ENCODE measurements at regions of chr17 and their contacts with region 1.

Region 1: DNA sequence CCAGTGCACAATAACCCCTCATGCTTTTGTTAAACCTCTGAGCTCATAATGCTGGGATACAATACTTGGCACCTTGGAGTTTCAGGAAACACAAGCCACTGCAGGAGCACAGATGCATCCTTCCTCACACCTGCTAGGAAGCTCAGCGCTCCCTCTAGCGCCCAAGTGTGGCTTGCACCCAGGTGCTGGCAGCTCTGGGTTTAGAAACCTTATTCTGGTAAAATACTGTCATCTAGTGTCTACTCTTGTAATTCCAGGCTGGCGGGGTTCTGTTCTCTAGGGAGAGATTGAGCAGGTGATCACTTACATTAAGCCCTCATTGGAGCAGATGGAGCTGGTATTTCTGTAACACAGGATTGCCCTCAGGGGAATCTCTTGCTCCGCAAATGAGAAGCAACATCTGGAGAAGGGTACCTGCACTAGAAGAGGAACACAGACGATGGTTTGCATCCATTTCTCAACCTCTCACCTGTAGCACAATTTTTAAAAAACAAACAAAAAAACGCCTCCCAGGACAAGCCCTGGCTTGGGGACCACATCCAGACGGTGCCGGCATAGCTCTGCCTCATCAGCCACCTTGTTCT is 1.5 kb downstream of the CCL1 start:
- DNase-seq: peak; percentile 88
- ATAC-seq: peak; percentile 92
- H3K4me3 Mint-ChIP-seq: no peak overlapping the region
- H3K27ac Mint-ChIP-seq: no peak overlapping the region
- H3K4me1 Mint-ChIP-seq: peaks cover 51% of the 10 kb centered on the region
- H3K27me3 Mint-ChIP-seq: peaks cover 23% of the 10 kb centered on the region

Region 2: DNA sequence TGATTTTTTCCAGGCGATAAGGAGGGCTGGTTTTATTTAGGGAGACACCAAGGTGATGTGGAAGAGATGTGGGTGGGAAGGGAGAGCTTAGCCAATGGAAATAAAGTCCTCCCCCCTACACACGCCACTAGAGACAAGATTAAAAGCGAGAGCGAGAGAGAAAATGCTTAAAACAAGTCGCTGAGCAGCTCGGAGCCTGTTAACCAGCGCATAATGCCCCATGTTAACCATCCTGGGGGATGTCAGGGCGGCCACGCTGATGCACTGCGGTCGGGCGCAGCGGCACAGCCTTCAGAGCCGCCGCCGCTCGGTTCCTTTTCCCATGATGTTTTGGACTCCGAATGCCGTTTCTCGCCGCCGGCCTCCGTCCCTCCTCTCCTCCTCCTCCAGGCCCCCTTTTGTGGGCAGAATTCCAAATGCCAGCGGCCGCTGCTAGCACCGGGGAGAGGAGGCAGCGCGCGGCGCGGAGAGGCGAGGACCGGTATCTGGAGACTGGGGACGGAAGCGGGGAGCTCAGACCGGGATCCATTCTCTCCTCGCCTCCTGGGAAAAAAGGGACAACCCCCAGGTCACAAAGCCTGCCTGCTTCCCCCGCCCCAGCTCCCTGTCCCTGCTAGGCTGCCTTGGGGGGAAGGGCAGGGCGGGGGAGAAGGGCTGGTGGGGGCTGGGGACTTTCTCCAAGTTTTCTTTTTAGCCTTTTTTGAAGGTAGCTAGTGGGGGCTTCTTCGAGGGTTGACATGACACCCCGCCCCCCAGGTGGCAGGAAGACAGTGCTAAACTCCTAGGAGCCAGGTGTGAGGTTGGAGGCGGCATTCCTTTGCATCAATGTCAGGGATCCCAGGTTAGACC is 204.6 kb before region 1 on chr17:
- CTCF ChIA-PET with region 1: interaction called, 11 read pairs
- POLR2A ChIA-PET with region 1: no interaction called
- DNase-seq: no peak
- ATAC-seq: no peak
- H3K4me3 Mint-ChIP-seq: no peak overlapping the region
- H3K27ac Mint-ChIP-seq: no peak overlapping the region
- H3K4me1 Mint-ChIP-seq: peaks cover 10% of the 10 kb centered on the region
- H3K27me3 Mint-ChIP-seq: peaks cover 66% of the 10 kb centered on the region

Region 3: DNA sequence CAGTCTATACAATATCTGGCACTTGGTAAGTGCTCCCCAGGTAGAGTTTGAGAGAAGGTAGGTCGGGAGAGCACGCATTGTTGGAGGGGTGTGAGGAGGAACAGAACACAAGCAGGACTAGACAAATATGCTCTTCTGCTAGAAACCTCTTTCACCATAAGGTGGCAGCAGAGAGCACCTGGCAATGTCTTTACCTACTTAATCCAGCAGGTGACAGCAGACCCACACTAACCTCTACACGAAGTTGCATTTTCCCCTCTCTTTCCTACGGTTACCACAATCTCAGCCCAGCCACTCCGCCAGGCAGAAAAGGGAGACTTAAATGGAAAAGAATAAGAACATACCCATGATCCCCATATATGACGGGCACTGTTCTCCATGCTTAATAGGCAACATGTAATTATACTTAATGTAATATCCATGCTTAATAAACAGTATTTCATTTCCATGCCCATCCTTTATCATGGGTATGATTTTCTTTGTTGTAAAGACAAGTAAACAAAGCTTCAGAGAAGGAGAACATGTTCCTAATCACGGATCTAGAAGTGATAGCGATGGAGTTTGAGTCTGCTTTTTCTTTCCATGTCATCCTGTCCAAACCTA is 161.5 kb before region 1 on chr17:
- CTCF ChIA-PET with region 1: interaction called, 313 read pairs
- POLR2A ChIA-PET with region 1: interaction called, 5 read pairs
- DNase-seq: peak; percentile 81
- ATAC-seq: peak; percentile 84
- H3K4me3 Mint-ChIP-seq: no peak overlapping the region
- H3K27ac Mint-ChIP-seq: no peak overlapping the region
- H3K4me1 Mint-ChIP-seq: peaks cover 4% of the 10 kb centered on the region
- H3K27me3 Mint-ChIP-seq: peaks cover 24% of the 10 kb centered on the region

Region 4: GRCh38 chr17:34300652-34301370 is 60.8 kb before region 1 on chr17:
- CTCF ChIA-PET with region 1: interaction called, 13 read pairs
- POLR2A ChIA-PET with region 1: no interaction called
- DNase-seq: no peak
- ATAC-seq: no peak
- H3K4me3 Mint-ChIP-seq: no peak overlapping the region
- H3K27ac Mint-ChIP-seq: no peak overlapping the region
- H3K4me1 Mint-ChIP-seq: peaks cover 4% of the 10 kb centered on the region
- H3K27me3 Mint-ChIP-seq: no peaks in the 10 kb centered on the region

Region 5: DNA sequence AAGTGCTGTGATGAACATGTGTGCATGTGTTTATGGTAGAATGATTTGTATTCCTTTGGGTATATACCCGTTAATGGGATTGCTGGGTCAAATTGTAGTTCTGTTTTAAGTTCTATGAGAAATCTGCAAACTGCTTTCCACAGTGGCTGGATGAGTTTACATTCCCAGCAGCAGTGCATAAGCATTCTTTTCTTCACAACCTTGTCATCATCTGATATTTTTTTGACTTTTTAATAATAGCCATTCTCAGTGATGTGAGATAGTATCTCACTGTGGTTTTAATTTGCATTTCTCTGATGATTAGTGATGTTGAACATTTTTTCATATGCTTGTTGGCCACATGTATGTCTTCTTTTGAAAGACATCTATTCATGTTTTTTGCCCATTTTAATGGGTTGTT is 23.9 kb before region 1 on chr17:
- CTCF ChIA-PET with region 1: interaction called, 11 read pairs
- POLR2A ChIA-PET with region 1: no interaction called
- DNase-seq: no peak
- ATAC-seq: no peak
- H3K4me3 Mint-ChIP-seq: no peak overlapping the region
- H3K27ac Mint-ChIP-seq: no peak overlapping the region
- H3K4me1 Mint-ChIP-seq: no peaks in the 10 kb centered on the region
- H3K27me3 Mint-ChIP-seq: peaks cover 32% of the 10 kb centered on the region

Region 6: GRCh38 chr17:34398990-34399389 is 37.4 kb after region 1 on chr17:
- CTCF ChIA-PET with region 1: interaction called, 70 read pairs
- POLR2A ChIA-PET with region 1: no interaction called
- DNase-seq: no peak
- ATAC-seq: peak; percentile 42
- H3K4me3 Mint-ChIP-seq: no peak overlapping the region
- H3K27ac Mint-ChIP-seq: peak overlapping the region; percentile 47
- H3K4me1 Mint-ChIP-seq: peaks cover 37% of the 10 kb centered on the region
- H3K27me3 Mint-ChIP-seq: peaks cover 26% of the 10 kb centered on the region

Region 7: GRCh38 chr17:34434052-34434451 is 72.5 kb after region 1 on chr17:
- CTCF ChIA-PET with region 1: interaction called, 11 read pairs
- POLR2A ChIA-PET with region 1: no interaction called
- DNase-seq: no peak
- ATAC-seq: no peak
- H3K4me3 Mint-ChIP-seq: no peak overlapping the region
- H3K27ac Mint-ChIP-seq: no peak overlapping the region
- H3K4me1 Mint-ChIP-seq: no peaks in the 10 kb centered on the region
- H3K27me3 Mint-ChIP-seq: peaks cover 16% of the 10 kb centered on the region

Region 8: DNA sequence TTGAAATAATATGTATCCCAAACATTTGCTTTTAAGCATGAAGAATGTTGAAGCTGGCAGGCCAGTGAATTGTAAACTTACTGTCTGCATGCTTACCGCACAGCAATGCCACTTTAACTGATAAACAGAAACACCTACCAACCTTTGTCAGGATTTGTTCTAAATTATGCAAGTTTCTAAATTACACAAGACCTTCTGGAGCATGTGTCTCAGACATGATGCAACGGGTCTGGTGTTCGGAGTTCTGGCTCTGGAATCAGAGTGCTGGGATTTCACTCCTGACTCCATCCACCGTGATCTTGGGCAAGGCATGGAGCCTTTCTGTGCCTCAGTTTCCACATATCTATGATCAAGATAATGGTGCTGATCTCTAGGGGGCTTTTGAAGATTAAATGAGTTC is 488.5 kb after region 1 on chr17:
- CTCF ChIA-PET with region 1: no interaction called
- POLR2A ChIA-PET with region 1: no interaction called
- DNase-seq: no peak
- ATAC-seq: no peak
- H3K4me3 Mint-ChIP-seq: no peak overlapping the region
- H3K27ac Mint-ChIP-seq: no peak overlapping the region
- H3K4me1 Mint-ChIP-seq: peaks cover 4% of the 10 kb centered on the region
- H3K27me3 Mint-ChIP-seq: peaks cover 2% of the 10 kb centered on the region